ENCODE measurements at regions of chr2 and their contacts with region 1.

Region 1: GRCh38 chr2:222208010-222208690 is 90.6 kb downstream of the PAX3 start:
- DNase-seq: peak; percentile 55
- H3K4me3 ChIP-seq: no peak overlapping the region
- H3K27ac ChIP-seq: peak overlapping the region; percentile 82
- H3K4me1 ChIP-seq: peaks cover 57% of the 10 kb centered on the region
- H3K27me3 ChIP-seq: no peaks in the 10 kb centered on the region
- CTCF ChIP-seq: no peak

Region 2: DNA sequence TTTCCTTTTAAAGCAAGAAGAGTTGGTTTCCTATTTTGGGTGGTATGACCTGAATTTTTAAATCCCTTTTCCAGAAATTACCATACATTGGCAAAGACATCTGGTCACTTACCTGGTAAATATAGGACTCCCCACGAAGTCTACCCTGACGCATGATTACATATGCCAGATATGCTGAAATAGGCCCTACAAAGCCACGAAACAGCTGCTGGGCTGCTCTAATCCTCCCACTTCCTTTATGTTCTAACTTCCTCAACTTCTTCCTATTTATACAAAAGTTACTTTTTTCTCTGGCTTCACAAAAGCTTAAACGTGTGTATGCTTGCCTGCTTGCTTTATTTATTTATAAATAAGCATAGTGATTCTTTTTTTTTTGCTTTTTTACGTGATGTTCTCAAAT is 450.1 kb before region 1 on chr2:
- CTCF ChIA-PET with region 1: no interaction called
- POLR2A ChIA-PET with region 1: no interaction called
- intact Hi-C with region 1: no loop called
- DNase-seq: no peak
- H3K4me3 ChIP-seq: no peak overlapping the region
- H3K27ac ChIP-seq: no peak overlapping the region
- H3K4me1 ChIP-seq: no peaks in the 10 kb centered on the region
- H3K27me3 ChIP-seq: no peaks in the 10 kb centered on the region
- CTCF ChIP-seq: no peak

Region 3: DNA sequence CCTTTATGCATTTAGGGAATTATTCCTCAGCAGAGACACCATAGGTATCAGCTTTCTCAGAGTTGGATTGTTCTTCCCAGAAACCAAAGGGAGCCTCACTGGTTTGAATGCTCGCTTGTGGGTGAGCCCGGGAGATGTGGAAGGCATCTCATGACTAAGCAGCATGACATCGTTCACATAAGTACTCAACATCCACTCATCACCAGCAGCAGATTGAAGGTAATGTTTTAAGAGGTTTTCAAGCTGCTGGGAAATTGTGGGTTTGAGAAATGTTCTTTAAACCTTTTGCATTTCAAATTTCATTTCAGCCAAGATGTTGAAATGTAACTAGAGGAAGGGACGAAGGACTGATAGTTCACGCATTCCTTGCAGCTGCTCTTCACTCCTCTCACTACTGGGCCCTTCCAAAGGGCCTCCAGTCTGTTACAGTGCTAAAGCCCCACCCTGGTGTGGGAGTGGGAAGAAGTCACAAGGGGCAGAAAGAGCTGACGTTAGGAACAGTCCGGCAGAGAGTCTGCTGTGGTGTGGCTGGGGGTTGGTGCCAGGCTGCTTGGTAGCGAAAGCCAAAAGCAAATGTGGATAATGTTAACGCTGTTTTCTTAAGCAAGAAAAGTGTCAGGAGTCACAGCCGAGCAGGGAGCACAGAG is 311.5 kb before region 1 on chr2:
- CTCF ChIA-PET with region 1: no interaction called
- POLR2A ChIA-PET with region 1: no interaction called
- intact Hi-C with region 1: no loop called
- DNase-seq: peak; percentile 23
- H3K4me3 ChIP-seq: no peak overlapping the region
- H3K27ac ChIP-seq: no peak overlapping the region
- H3K4me1 ChIP-seq: peaks cover 3% of the 10 kb centered on the region
- H3K27me3 ChIP-seq: no peaks in the 10 kb centered on the region
- CTCF ChIP-seq: no peak

Region 4: DNA sequence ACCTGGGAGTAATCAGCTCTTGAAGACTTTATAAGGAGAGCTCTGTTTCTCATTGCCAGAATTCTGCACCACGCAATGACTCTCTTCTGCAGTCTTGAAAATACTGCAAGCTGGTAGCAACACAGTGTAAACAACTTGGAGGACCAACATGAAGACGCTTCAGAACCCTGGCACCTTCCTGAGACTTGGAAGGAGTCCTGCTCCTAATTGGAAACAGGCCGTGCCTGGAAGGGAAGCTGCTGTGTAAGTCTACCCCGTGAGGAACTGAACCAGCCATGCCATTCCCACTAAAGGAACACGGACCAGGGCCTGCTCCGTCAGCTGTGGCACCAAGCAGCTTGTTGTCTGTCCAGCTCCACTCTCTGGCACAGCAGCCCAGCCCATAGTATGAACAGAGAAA is 80.5 kb before region 1 on chr2:
- CTCF ChIA-PET with region 1: no interaction called
- POLR2A ChIA-PET with region 1: no interaction called
- intact Hi-C with region 1: loop called (anchors 10 kb)
- DNase-seq: no peak
- H3K4me3 ChIP-seq: no peak overlapping the region
- H3K27ac ChIP-seq: no peak overlapping the region
- H3K4me1 ChIP-seq: peaks cover 18% of the 10 kb centered on the region
- H3K27me3 ChIP-seq: no peaks in the 10 kb centered on the region
- CTCF ChIP-seq: no peak

Region 5: GRCh38 chr2:222290736-222291484 is 82.8 kb after region 1 on chr2:
- CTCF ChIA-PET with region 1: no interaction called
- POLR2A ChIA-PET with region 1: interaction called, 4 read pairs
- intact Hi-C with region 1: loop called (anchors 5 kb)
- DNase-seq: peak; percentile 87
- H3K4me3 ChIP-seq: peak overlapping the region; percentile 48
- H3K27ac ChIP-seq: peak overlapping the region; percentile 78
- H3K4me1 ChIP-seq: peaks cover 38% of the 10 kb centered on the region
- H3K27me3 ChIP-seq: no peaks in the 10 kb centered on the region
- CTCF ChIP-seq: 0 out of 2 replicates have a peak, but pooled peaks have one; percentile 22

Region 6: DNA sequence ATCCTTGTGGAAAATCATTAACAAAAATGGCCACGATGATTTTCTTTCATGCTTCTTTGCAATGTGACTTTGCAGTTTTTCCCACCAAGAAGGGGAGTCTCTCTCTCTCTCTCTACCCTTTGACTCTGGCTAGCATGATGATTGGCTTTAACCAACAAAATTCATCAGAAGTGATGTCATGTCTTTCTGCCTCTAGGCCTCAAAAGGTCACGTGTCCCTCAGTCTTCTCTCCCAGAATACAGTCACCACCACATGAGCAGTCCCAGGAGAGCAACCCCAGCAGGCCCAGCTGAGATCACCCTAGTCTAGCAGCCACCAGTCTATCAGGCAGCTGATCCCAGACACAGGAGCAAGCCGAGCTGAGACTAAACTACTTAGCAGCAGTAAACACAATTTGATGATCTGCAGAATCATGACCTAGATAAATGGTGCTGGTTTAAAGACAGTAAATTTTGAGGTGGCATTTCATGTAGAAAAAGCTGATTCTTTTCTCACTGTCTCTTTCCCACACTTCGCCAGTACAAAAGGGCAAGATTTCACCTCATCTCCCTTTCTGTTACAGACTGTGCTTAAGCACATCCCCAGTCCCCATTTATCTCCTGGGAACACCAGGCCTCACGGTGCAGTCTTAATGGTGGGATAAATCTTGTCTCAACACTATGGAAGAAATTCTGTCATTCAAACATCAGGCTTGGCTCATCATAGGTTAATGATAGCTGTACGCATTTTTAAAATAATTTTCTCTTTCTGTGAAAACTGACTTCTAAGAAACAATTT is 1261.3 kb after region 1 on chr2:
- CTCF ChIA-PET with region 1: no interaction called
- POLR2A ChIA-PET with region 1: no interaction called
- intact Hi-C with region 1: no loop called
- DNase-seq: peak; percentile 24
- H3K4me3 ChIP-seq: no peak overlapping the region
- H3K27ac ChIP-seq: no peak overlapping the region
- H3K4me1 ChIP-seq: peaks cover 3% of the 10 kb centered on the region
- H3K27me3 ChIP-seq: no peaks in the 10 kb centered on the region
- CTCF ChIP-seq: no peak

Measured in A673 (cell line).